H1 (cell line): ENCODE measurements at regions of chr9 and their contacts with region 1.

Region 1: GRCh38 chr9:76987594-76988200 is 31.8 kb upstream of the FOXB2 start:
- DNase-seq: peak; percentile 38 to 59
- H3K4me3 ChIP-seq: no peak overlapping the region
- H3K27ac ChIP-seq: no peak overlapping the region
- H3K4me1 ChIP-seq: no peaks in the 10 kb centered on the region
- H3K27me3 ChIP-seq: no peaks in the 10 kb centered on the region
- CTCF ChIP-seq: peak in 2 of 3 experiments; percentile 83 to 87; a peak in 3 of 4 replicates
- EP300 ChIP-seq: no peak
- POLR2A ChIP-seq: no peak
- RAD21 ChIP-seq: peak; percentile 95 to 98

Region 2: DNA sequence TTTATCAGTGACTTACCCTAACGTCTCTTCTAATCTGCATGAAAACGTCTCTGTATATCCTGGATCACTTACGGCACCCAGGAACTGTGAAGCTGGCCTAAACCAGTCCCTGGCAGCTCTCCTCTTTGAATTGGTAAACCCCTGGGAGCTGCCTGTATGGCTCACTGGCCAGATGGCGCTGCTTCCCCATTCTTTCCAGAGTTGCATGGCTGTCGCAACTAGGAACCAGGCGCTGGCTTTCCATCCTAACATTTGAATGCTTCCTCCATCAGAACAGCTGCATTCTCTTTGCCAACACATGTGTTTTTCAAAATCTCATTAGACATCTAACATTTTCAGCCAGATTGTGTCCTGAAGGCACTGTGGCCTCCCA is 231.4 kb before region 1 on chr9:
- CTCF ChIA-PET with region 1: interaction called, 14 read pairs
- POLR2A ChIA-PET with region 1: no interaction called
- DNase-seq: peak; percentile 25 to 60
- H3K4me3 ChIP-seq: no peak overlapping the region
- H3K27ac ChIP-seq: no peak overlapping the region
- H3K4me1 ChIP-seq: peaks cover 0 to 5% (median 2%) of the 10 kb centered on the region in 4 experiments; a peak in 4 of 7 replicates
- H3K27me3 ChIP-seq: no peaks in the 10 kb centered on the region
- CTCF ChIP-seq: peak; percentile 51 to 63 (median 56)
- EP300 ChIP-seq: no peak
- POLR2A ChIP-seq: no peak
- RAD21 ChIP-seq: peak; percentile 72 to 80

Region 3: DNA sequence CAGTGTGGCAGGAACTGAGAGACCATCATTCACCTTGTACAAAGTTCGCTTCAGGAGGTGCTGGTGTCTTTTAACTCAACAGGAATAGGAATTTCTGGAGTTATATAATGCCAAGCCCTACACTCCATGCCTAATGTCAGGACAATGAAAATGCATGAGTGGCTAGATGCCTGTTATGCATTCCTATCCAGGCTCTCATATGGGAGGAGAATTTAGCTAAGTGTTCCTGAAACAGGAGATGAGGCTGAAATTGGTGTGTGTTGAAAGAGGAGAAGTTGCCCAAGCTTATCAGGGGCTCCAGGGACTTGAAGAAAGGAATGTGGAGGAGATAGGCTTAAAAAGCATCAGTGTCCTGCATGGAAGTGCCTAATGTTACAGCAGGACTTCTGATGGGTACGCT is 54.9 kb before region 1 on chr9:
- CTCF ChIA-PET with region 1: no interaction called
- POLR2A ChIA-PET with region 1: no interaction called
- DNase-seq: no peak
- H3K4me3 ChIP-seq: no peak overlapping the region
- H3K27ac ChIP-seq: no peak overlapping the region
- H3K4me1 ChIP-seq: no peaks in the 10 kb centered on the region
- H3K27me3 ChIP-seq: no peaks in the 10 kb centered on the region
- CTCF ChIP-seq: no peak
- EP300 ChIP-seq: no peak
- POLR2A ChIP-seq: no peak
- RAD21 ChIP-seq: no peak